Activated T-helper 2 cell treated with anti-CD3 and anti-CD28 coated beads, Interferon-gamma antibody, Interleukin-2, Interleukin-4, amounts not matched to agents 10 μg/mL and 5 μg/mL and 100 μg/mL, durations not matched to agents 14 hours and 24 hours and 36 hours (primary cell): ENCODE measurements at regions of chr3 and their contacts with region 1.

Region 1: DNA sequence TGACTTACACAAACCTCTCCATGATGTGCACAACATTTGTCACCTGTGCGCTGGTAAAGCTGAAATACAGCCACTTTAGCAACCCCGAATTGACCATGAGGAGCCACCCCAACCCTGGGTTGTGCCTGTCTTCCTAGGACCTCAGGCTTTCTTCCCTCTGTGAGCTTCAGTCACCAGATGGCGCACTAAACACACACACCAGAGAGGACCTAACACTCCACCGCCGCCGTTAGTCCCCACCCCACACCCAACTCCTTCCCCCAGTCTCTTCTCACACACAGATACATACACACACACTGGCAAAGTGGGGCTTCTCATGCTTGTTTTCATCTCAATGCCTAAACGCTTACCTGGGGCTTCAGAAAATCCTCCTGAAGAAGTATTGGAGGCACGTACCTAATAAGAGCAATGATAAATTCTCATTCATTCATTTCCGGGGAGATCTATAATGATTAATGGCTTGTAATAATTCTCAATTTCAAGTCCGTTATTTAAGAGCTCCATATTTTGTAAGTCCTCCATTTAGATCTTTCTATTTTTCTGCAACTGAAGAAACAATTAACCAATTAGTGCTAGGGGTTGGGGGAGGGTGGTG is 2.1 kb upstream of the CCDC80 start:
- DNase-seq: peak; percentile 75
- H3K4me3 Mint-ChIP-seq: peak overlapping the region; percentile 65
- H3K27ac Mint-ChIP-seq: no peak overlapping the region
- H3K4me1 Mint-ChIP-seq: peaks cover 23% of the 10 kb centered on the region
- H3K27me3 Mint-ChIP-seq: peaks cover 10% of the 10 kb centered on the region

Region 2: DNA sequence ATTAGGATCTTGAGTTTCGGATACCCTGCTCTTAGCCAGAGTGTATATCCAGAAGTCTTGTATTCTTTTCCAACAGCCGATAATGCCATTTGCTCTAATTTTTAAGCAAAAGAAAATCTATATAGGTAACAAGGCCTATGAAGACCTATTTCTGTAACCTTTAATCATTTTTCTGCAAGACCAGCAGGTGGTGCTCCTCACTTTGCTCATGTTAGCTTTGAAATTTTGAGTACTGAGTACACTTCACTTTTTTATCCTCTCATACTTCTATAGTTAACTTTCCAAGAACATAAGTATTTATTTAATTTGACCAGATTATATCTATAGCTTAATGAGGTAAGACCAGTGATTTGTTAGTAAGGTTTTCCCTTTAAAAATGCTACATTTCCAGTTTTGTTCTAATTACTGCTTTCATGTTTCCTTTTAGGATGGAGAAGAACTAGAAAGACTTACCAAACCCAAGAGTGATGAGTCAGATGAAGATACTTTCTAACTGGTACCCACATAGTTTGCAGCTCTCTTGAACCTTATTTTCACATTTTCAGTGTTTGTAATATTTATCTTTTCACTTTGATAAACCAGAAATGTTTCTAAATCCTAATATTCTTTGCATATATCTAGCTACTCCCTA is 60.6 kb before region 1 on chr3:
- intact Hi-C with region 1: loop called (anchors 2 kb)
- DNase-seq: peak; percentile 21
- H3K4me3 Mint-ChIP-seq: no peak overlapping the region
- H3K27ac Mint-ChIP-seq: no peak overlapping the region
- H3K4me1 Mint-ChIP-seq: peaks cover 10% of the 10 kb centered on the region
- H3K27me3 Mint-ChIP-seq: no peaks in the 10 kb centered on the region

Region 3: GRCh38 chr3:112814266-112814665 is 171.3 kb after region 1 on chr3:
- intact Hi-C with region 1: loop called (anchors 2 kb)
- DNase-seq: no peak
- H3K4me3 Mint-ChIP-seq: no peak overlapping the region
- H3K27ac Mint-ChIP-seq: no peak overlapping the region
- H3K4me1 Mint-ChIP-seq: peaks cover 27% of the 10 kb centered on the region
- H3K27me3 Mint-ChIP-seq: peaks cover 8% of the 10 kb centered on the region

Region 4: GRCh38 chr3:112979240-112979832 is 336.3 kb after region 1 on chr3:
- intact Hi-C with region 1: loop called (anchors 1 kb)
- DNase-seq: no peak
- H3K4me3 Mint-ChIP-seq: no peak overlapping the region
- H3K27ac Mint-ChIP-seq: no peak overlapping the region
- H3K4me1 Mint-ChIP-seq: peaks cover 61% of the 10 kb centered on the region
- H3K27me3 Mint-ChIP-seq: peaks cover 5% of the 10 kb centered on the region